AG04450 (cell line): ENCODE measurements at regions of chr18 and their contacts with region 1.

Region 1: GRCh38 chr18:45295388-45295787 is 319.9 kb upstream of the SLC14A2 start:
- DNase-seq: no peak
- H3K4me3 ChIP-seq: no peak overlapping the region
- H3K27ac ChIP-seq: no peak overlapping the region
- H3K27me3 ChIP-seq: peaks cover 3% of the 10 kb centered on the region
- CTCF ChIP-seq: no peak

Region 2: DNA sequence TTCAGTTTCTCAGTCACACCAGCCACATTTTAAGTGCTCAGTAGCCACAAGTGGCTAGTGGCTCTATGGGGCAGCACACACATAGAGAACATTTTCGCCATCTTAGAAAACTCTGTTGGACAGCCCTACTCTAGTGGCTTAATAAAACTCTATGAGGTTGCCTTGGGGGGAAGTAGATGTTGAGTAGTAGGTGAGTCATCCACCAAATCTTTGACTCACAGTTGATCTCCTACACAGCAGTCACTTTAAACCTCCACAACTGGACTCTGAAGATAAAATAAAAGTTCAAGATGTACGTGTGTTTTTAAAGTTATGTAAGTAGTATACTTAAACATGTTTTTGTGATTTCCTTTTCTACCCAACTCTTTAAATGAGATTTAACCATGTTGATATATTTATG is 235.7 kb before region 1 on chr18:
- CTCF ChIA-PET with region 1: no interaction called
- POLR2A ChIA-PET with region 1: no interaction called
- DNase-seq: peak; percentile 24
- H3K4me3 ChIP-seq: no peak overlapping the region
- H3K27ac ChIP-seq: no peak overlapping the region
- H3K27me3 ChIP-seq: no peaks in the 10 kb centered on the region
- CTCF ChIP-seq: no peak

Region 3: GRCh38 chr18:45275367-45276113 is 19.8 kb before region 1 on chr18:
- CTCF ChIA-PET with region 1: interaction called, 22 read pairs
- POLR2A ChIA-PET with region 1: no interaction called
- DNase-seq: no peak
- H3K4me3 ChIP-seq: no peak overlapping the region
- H3K27ac ChIP-seq: no peak overlapping the region
- H3K27me3 ChIP-seq: no peaks in the 10 kb centered on the region
- CTCF ChIP-seq: peak; percentile 80

Region 4: DNA sequence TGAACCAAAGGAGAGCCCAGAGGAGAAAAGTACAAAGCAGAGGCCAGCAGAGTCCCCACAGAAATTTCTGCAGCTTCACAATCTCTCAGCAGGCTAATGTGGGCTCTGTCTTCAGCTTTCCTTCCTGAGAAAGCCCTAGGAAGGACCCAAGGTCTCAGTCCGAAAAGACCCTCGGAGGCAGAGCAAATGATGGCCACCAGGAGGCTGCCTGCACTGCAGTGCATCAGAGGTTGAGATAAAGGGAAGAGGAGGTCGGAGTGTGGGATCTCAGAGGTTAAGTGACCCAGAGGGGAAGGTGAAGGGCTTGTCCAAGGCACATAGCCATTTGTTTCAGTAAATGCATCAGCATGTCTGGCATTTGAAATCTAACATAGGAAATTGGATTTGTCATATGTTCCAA is 20.7 kb after region 1 on chr18:
- CTCF ChIA-PET with region 1: no interaction called
- POLR2A ChIA-PET with region 1: no interaction called
- DNase-seq: no peak
- H3K4me3 ChIP-seq: no peak overlapping the region
- H3K27ac ChIP-seq: no peak overlapping the region
- H3K27me3 ChIP-seq: peaks cover 2% of the 10 kb centered on the region
- CTCF ChIP-seq: 0 out of 2 replicates have a peak, but pooled peaks have one; percentile 2

Region 5: DNA sequence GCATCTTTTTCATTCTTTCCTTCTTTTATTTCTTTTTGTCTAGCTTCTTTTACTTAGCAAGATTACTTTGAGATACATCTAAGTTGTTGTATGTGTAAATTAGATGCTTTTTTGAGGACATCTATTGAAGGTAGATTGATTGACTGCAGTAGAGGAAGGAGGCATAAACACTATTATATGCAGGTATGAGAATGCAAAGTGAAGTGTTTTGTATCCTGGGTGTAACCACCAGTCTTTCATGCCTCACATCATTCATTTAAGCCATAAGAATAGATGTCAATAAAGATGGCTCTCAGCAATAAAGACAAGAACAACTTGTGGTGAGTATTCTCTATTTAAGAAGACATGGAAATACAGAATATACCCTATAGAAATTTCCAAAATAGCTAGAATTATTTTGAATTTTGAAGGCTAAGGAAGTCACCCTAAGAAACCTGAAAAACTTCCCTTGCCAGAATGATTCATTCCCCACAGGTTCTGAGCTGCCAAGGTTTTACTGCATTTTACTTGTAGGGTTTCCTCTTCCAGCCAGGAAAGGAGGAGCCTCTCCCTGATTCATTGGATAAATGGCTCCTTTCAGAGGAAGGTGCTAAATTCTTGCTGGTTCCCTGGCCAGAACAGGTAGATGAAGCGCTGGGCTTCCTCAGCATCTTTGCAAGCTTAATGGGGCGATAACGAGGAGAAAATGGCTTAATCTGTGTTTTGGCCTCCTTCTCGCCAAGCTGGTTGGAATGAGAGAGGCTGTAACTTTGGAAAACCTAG is 40.1 kb after region 1 on chr18:
- CTCF ChIA-PET with region 1: no interaction called
- POLR2A ChIA-PET with region 1: no interaction called
- DNase-seq: no peak
- H3K4me3 ChIP-seq: no peak overlapping the region
- H3K27ac ChIP-seq: no peak overlapping the region
- H3K27me3 ChIP-seq: no peaks in the 10 kb centered on the region
- CTCF ChIP-seq: no peak